ENCODE measurements at regions of chr9 and their contacts with region 1.

Region 1: GRCh38 chr9:12702160-12702758 is 9.1 kb downstream of the TYRP1 start:
- DNase-seq: peak; percentile 9 to 17
- ATAC-seq: peak in 6 of 8 donors; percentile 46 to 80 (median 64)
- H3K4me3 ChIP-seq: no peak overlapping the region
- H3K27ac ChIP-seq: no peak overlapping the region
- H3K4me1 ChIP-seq: peaks cover 0 to 17% (median 6%) of the 10 kb centered on the region in 9 donors
- H3K27me3 ChIP-seq: no peaks in the 10 kb centered on the region
- CTCF ChIP-seq: peak; percentile 8 to 66 (median 51)

Region 2: GRCh38 chr9:12631866-12632265 is 70.4 kb before region 1 on chr9:
- intact Hi-C with region 1: no loop called
- DNase-seq: no peak
- ATAC-seq: no peak
- H3K4me3 ChIP-seq: no peak overlapping the region
- H3K27ac ChIP-seq: no peak overlapping the region
- H3K4me1 ChIP-seq: no peaks in the 10 kb centered on the region
- H3K27me3 ChIP-seq: peaks cover 0 to 13% (median 0%) of the 10 kb centered on the region in 7 donors
- CTCF ChIP-seq: no peak

Region 3: GRCh38 chr9:12759761-12760160 is 57.5 kb after region 1 on chr9:
- intact Hi-C with region 1: loop called in 1 of 10 experiments (anchors 10 kb)
- DNase-seq: no peak
- ATAC-seq: no peak
- H3K4me3 ChIP-seq: no peak overlapping the region
- H3K27ac ChIP-seq: no peak overlapping the region
- H3K4me1 ChIP-seq: no peaks in the 10 kb centered on the region
- H3K27me3 ChIP-seq: no peaks in the 10 kb centered on the region
- CTCF ChIP-seq: no peak

Measured in heart right ventricle (tissue), 16 donors.